ENCODE measurements at regions of chr5 and their contacts with region 1.

Region 1: DNA sequence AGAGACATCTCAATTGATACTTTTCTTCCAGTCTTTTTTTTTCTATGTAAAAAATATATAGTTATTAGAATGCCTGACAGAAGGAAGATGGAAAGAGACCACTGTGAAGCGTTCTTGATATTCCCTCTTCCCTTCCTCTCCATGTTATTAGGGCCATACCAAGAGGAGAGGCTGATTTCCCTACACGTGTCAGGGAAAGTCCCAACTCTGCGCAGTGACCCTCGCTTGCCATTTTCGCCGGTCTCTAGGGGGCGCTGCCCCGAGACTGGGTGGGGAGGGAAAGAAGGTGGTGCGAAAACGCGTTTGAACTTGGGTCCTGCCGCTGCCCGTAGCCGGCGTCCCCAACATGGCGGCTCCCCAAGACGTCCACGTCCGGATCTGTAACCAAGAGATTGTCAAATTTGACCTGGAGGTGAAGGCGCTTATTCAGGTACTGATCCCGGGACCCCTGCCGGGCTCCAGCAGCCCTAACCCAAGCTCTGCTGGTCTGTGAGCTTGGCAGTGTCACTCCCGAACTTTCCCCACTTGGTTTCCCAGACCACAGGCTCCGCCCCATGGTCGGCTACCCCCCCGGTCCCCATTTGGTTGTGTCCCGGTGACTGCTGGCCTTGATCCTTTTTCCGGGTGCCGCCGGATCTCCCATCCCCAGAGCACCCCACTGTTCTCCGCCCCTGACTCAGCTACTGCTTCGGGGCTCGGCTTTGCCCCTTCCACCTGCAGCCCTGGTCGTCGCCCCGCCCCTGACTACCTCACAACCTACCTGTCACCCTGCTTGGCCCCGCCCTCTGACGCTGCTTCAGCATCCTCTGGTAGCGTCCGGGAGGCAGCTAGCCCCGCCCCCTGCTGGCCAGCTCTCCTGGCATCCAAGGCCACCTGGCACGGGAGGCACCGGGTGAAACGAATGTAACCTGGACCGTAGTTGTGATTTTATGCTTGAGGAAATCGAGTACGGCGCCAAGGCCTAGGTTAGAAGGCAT is at the start of gene BNIP1:
- DNase-seq: peak; percentile 91
- CTCF ChIP-seq: peak; percentile 98

Region 2: GRCh38 chr5:172984243-172984953 is 160.1 kb before region 1 on chr5:
- in situ Hi-C with region 1: loop called (anchors 25 kb)
- DNase-seq: peak; percentile 82
- CTCF ChIP-seq: peak; percentile 73

Region 3: GRCh38 chr5:173035904-173036707 is 108.4 kb before region 1 on chr5:
- in situ Hi-C with region 1: no loop called
- DNase-seq: peak; percentile 61
- CTCF ChIP-seq: no peak

Region 4: DNA sequence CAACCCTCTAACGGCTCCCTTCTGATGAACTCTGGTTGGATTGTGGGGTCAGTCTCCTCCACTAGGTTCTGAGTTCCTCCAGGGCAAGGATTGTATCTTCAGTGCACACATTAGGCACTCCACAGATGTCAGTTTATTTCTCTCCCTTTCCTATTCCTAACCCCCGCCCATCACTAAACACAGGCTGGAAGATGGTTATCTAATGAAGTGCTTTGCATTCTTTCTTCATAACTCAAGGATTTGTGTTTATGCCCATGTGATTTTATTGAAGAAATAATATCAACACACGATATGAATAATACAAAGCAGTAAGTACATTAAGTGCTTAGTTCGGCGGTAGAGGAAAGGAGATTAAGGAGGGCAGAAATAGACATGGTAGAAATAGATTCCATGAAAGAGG is 92.7 kb before region 1 on chr5:
- in situ Hi-C with region 1: no loop called
- DNase-seq: no peak
- CTCF ChIP-seq: no peak

Region 5: DNA sequence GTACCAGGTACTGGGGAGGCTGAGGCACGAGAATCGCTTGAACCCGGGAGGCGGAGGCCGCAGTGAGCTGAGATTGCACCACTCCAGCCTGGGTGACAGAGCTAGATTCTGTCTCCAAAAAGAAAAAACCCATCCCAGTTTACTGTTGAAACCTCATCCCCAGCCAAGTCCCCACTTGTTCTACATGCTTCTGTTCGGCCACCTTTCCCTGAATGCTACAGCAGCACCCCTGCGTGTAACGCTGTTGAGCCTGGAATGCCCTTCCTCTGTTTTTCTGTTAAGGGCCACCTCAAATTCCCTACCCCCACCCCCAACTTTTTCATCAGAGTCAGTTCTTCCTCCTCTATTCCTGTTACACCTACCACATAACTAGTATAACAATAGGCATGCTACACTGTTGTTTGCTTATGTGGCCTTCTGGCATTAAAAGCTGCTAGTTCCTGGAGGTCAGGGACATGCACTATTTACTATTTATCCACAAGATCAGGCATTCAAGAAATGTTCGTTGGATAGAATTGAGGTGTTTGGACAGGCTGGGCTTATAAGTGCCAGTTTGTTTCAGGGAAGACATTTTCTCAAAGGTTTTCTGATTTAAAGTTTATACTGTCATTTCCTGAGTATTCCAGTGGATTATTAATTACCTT is 797.4 kb after region 1 on chr5:
- in situ Hi-C with region 1: no loop called
- DNase-seq: no peak
- CTCF ChIP-seq: no peak

Measured in GM13977 (cell line).